ENCODE measurements at regions of chr2 and their contacts with region 1.

Region 1: DNA sequence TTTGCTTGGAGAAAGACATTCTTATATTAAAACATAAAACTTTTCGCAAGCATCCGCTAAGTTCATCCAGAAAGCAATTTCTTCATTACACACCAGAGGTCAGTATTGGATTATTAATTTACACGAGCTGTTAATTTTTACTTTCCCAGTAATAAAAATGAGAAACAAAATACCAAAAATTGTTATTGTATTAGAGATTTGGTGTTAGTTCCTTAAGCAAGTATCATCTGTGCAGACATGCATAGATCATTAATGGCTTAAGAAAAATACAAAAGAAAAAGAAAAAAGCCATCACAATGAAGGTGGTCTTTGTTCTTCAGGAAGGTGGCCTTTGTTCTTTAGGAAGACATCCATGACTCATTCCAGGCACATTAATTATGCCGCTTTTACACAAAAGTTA is 53.6 kb upstream of the HNMT start:
- DNase-seq: no peak
- H3K4me3 ChIP-seq: no peak overlapping the region
- H3K27ac ChIP-seq: no peak overlapping the region
- H3K4me1 ChIP-seq: no peaks in the 10 kb centered on the region
- H3K27me3 ChIP-seq: no peaks in the 10 kb centered on the region
- CTCF ChIP-seq: peak in 2 of 3 experiments; percentile 35 to 39

Region 2: DNA sequence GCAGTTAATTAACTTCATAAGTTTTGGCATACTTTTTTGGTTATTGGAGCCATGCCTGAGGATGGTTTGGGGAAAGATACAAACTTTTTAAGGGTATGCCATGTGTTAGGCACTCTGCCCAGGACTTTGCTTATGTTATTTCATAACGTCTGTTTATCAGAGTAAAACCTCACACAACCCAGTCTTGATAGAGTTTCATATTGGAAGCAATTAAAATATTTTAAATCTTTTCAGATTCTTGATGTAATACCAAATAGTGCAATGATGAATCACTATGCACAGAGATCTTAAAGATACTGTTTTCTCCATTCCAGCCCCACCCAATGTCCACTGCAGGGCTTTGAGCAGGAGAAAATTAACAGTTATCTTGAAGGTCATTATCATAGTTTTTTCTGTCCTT is 475.5 kb before region 1 on chr2:
- dilution Hi-C with region 1: no loop called
- DNase-seq: no peak
- H3K4me3 ChIP-seq: no peak overlapping the region
- H3K27ac ChIP-seq: no peak overlapping the region
- H3K4me1 ChIP-seq: peaks cover 18% of the 10 kb centered on the region
- H3K27me3 ChIP-seq: no peaks in the 10 kb centered on the region
- CTCF ChIP-seq: no peak

Region 3: DNA sequence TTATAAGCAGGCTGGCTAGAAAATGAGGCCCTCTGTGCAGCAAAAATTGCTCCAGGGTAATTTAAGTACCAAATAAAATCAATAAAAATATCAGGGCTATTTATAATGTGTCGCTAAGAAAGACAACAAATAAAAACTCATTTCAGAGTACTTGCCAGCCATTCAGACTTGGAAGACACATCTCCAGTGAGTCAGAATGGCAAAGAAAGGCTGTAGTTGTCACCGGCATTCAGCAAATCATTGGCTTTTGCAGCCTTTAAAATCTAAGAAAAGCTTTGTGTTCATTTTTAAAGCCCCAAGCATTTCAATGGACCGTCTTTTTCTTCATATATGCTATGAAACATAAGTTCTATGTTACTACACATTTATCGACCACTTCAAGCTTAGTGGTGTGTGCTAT is 87.4 kb before region 1 on chr2:
- dilution Hi-C with region 1: no loop called
- DNase-seq: no peak
- H3K4me3 ChIP-seq: no peak overlapping the region
- H3K27ac ChIP-seq: no peak overlapping the region
- H3K4me1 ChIP-seq: no peaks in the 10 kb centered on the region
- H3K27me3 ChIP-seq: no peaks in the 10 kb centered on the region
- CTCF ChIP-seq: no peak

Region 4: DNA sequence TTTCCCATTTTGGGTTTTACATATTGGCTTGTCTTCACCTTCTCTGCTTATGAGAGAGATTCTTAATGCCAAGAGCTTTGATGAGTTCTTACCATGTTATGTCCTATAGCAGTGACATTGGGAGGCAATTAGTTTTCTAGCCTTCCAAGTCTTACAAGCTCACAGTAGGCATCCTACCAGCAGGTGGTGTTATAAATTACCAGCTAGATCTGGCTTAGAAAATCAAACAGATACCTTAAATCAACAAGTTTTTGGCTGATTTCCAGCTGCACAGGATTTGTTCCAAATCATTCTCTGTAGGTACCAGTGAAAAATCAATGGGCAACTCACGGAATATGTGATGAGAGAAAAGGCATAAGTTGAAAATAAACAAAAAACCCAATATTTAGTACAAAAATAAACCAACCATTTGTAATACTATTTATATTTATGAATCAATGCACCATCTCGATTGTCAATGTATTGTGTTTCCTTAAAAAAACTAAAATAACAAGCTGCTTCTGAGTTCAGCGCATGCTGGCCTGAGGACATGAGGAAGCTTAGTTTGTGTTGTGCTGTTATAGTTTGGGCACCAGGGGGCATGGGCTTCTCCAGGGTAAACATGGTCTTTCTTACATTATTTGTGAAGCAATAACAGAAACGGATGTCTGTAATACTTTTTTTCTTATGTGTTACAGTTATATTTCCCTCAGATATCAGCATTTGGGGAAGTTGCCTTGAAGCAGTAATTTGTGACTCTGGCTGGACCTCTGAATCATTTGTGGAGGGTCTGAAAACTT is 903.7 kb after region 1 on chr2:
- dilution Hi-C with region 1: loop called (anchors 25 kb)
- DNase-seq: no peak
- H3K4me3 ChIP-seq: no peak overlapping the region
- H3K27ac ChIP-seq: no peak overlapping the region
- H3K4me1 ChIP-seq: no peaks in the 10 kb centered on the region
- H3K27me3 ChIP-seq: peaks cover 3% of the 10 kb centered on the region
- CTCF ChIP-seq: peak in 2 of 3 experiments; percentile 24 to 26

Measured in keratinocyte (primary cell).